Endothelial cell of umbilical vein (primary cell): ENCODE measurements at regions of chrX and their contacts with region 1.

Region 1: GRCh38 chrX:25144043-25144940 is 128.5 kb upstream of the ARX start:
- DNase-seq: peak; percentile 43
- H3K4me3 ChIP-seq: no peak overlapping the region
- H3K27ac ChIP-seq: no peak overlapping the region
- H3K4me1 ChIP-seq: no peaks in the 10 kb centered on the region
- H3K27me3 ChIP-seq: peaks cover 3 to 7% of the 10 kb centered on the region in 2 experiments
- CTCF ChIP-seq: peak; percentile 47 to 61
- POLR2A ChIP-seq: no peak

Region 2: GRCh38 chrX:24748202-24748843 is 396.0 kb before region 1 on chrX:
- CTCF ChIA-PET with region 1: interaction called, 65 read pairs
- POLR2A ChIA-PET with region 1: no interaction called
- dilution Hi-C with region 1: no loop called
- intact Hi-C with region 1: loop called (anchors 1 kb)
- DNase-seq: no peak
- H3K4me3 ChIP-seq: no peak overlapping the region
- H3K27ac ChIP-seq: no peak overlapping the region
- H3K4me1 ChIP-seq: no peaks in the 10 kb centered on the region
- H3K27me3 ChIP-seq: no peaks in the 10 kb centered on the region
- CTCF ChIP-seq: no peak
- POLR2A ChIP-seq: no peak

Region 3: GRCh38 chrX:24838629-24839028 is 305.7 kb before region 1 on chrX:
- CTCF ChIA-PET with region 1: interaction called, 83 read pairs
- POLR2A ChIA-PET with region 1: no interaction called
- dilution Hi-C with region 1: no loop called
- intact Hi-C with region 1: loop called (anchors 1 kb)
- DNase-seq: peak; percentile 42
- H3K4me3 ChIP-seq: no peak overlapping the region
- H3K27ac ChIP-seq: no peak overlapping the region
- H3K4me1 ChIP-seq: no peaks in the 10 kb centered on the region
- H3K27me3 ChIP-seq: no peaks in the 10 kb centered on the region
- CTCF ChIP-seq: peak in 1 of 2 donors; percentile 21
- POLR2A ChIP-seq: no peak

Region 4: DNA sequence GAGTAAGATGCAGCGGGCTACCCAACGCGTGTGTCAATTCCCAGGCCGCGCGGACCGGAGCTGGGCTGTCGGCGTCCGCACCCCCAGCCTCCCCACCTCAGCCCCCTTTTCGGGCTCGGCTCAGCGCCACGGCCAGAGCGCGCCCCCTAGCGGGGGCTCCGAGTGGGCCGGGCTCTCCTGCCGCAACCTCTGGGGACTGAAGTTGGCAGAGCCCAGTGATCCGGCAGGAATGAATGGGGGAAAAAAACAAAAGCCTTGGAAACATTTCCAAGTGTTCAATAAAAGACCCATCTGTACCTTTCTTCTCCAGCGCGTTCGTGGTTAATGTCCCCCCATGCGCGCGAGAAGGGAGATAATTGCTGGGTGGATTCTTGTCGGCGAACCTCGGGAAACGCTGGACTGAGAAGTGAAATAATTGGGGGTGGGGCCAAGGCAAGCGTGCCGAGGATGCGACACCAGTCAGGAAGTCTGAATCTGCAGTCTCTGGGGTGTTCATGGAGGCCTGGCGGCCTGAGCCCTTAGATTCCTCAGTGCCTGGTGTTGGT is 123.3 kb before region 1 on chrX:
- CTCF ChIA-PET with region 1: interaction called, 5 read pairs
- POLR2A ChIA-PET with region 1: no interaction called
- dilution Hi-C with region 1: no loop called
- intact Hi-C with region 1: loop called (anchors 5 kb)
- DNase-seq: no peak
- H3K4me3 ChIP-seq: no peak overlapping the region
- H3K27ac ChIP-seq: no peak overlapping the region
- H3K4me1 ChIP-seq: peaks cover 2% of the 10 kb centered on the region
- H3K27me3 ChIP-seq: peaks cover 74 to 92% of the 10 kb centered on the region in 2 experiments
- CTCF ChIP-seq: peak; percentile 51 to 76
- POLR2A ChIP-seq: no peak

Region 5: GRCh38 chrX:25131055-25131454 is 13.2 kb before region 1 on chrX:
- CTCF ChIA-PET with region 1: interaction called, 13 read pairs
- POLR2A ChIA-PET with region 1: no interaction called
- dilution Hi-C with region 1: no loop called
- intact Hi-C with region 1: no loop called
- DNase-seq: no peak
- H3K4me3 ChIP-seq: no peak overlapping the region
- H3K27ac ChIP-seq: no peak overlapping the region
- H3K4me1 ChIP-seq: no peaks in the 10 kb centered on the region
- H3K27me3 ChIP-seq: no peaks in the 10 kb centered on the region
- CTCF ChIP-seq: no peak
- POLR2A ChIP-seq: no peak